ENCODE measurements at regions of chr10 and their contacts with region 1.

Region 1: GRCh38 chr10:5623081-5623748 is 43.2 kb downstream of the ASB13 start:
- DNase-seq: peak; percentile 96
- ATAC-seq: peak; percentile 98
- H3K4me3 ChIP-seq: no peak overlapping the region
- H3K27ac ChIP-seq: no peak overlapping the region
- H3K4me1 ChIP-seq: no peaks in the 10 kb centered on the region
- H3K27me3 ChIP-seq: no peaks in the 10 kb centered on the region
- CTCF ChIP-seq: peak; percentile 89

Region 2: DNA sequence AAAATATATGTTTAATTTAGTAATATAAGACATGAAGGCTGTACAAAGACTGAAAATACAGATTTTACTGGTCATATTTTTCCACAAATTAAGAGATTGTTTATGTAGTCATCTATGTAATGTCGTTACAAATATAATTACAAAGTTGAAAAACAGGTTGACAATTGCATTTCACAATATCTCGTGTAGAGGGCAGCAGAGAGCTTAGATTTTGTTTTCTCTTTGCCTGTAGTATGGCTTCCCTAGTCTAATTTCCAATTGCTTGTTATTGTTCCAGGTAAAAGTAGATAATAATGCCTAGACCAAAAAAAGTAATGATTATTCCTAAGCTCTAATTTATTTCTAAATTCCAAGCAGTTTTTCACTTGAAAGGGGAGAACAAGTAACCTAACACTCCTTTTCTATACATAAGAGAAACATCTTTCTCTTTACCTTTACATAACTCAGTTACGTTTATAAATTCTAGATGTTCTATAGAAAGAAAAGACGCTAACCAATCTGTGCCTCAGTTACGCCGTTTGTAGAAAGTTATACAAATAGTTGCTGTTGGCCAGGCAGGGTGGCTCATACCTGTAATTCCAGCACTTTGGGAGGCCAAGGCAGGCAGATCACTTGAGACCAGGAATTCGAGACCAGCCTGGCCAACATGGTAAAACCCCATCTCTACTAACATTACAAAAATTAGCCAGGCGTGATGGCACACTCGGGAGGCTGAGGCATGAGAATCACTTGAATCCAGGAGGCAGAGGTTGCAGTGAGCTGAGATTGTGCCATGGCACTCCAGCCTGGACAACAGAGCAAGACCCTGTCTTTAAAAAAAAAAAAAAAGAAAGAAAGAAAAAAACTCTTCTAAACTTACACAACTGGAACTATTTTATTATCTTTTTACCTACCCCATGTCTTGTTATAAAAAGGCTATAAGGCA is 180.9 kb before region 1 on chr10:
- intact Hi-C with region 1: loop called (anchors 5 kb)
- DNase-seq: no peak
- ATAC-seq: peak; percentile 43
- H3K4me3 ChIP-seq: no peak overlapping the region
- H3K27ac ChIP-seq: no peak overlapping the region
- H3K4me1 ChIP-seq: no peaks in the 10 kb centered on the region
- H3K27me3 ChIP-seq: no peaks in the 10 kb centered on the region
- CTCF ChIP-seq: peak; percentile 83

Measured in upper lobe of right lung (tissue), 1 donor.